ENCODE measurements at regions of chr17 and their contacts with region 1.

Region 1: GRCh38 chr17:55770148-55770870 is 19.5 kb downstream of the PCTP start:
- DNase-seq: peak; percentile 73
- H3K4me3 ChIP-seq: no peak overlapping the region; a peak in 1 of 4 replicates
- H3K27ac ChIP-seq: no peak overlapping the region
- H3K4me1 ChIP-seq: peaks cover 8 to 9% of the 10 kb centered on the region in 2 experiments
- H3K27me3 ChIP-seq: no peaks in the 10 kb centered on the region
- CTCF ChIP-seq: peak; percentile 85
- EP300 ChIP-seq: no peak
- RAD21 ChIP-seq: peak; percentile 94

Region 2: DNA sequence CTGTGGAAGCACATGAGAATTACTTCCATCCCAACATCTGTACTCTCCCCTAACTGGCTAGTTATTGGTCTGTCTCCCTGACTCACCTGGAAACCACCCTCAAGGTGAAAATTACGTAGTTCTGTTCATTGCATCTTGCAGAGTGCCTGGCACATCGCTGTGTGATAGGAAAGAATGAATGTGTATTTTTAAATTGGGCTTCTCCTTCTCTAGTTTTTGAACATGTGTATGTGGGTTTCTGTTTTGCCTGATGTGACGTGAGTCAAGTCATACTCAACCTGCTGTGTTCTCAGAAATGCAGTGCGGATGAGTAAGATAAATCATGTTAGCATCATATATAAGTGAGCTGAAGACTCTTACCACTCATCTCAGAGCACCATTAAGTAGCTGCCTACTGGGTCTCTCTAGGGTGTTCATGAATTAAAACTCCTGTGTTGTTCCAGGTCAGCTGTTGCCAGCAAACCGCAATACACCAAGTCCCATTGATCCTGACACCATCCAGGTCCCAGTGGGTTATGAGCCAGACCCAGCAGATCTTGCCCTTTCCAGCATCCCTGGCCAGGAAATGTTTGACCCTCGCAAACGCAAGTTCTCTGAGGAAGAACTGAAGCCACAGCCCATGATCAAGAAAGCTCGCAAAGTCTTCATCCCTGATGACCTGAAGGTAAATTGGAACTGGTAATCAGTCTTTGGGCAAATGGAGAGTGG is 455.4 kb before region 1 on chr17:
- CTCF ChIA-PET with region 1: no interaction called
- POLR2A ChIA-PET with region 1: no interaction called
- DNase-seq: no peak
- H3K4me3 ChIP-seq: no peak overlapping the region
- H3K27ac ChIP-seq: no peak overlapping the region
- H3K4me1 ChIP-seq: no peaks in the 10 kb centered on the region
- H3K27me3 ChIP-seq: no peaks in the 10 kb centered on the region
- CTCF ChIP-seq: no peak
- EP300 ChIP-seq: no peak
- RAD21 ChIP-seq: no peak

Region 3: GRCh38 chr17:55533608-55534007 is 236.7 kb before region 1 on chr17:
- CTCF ChIA-PET with region 1: interaction called, 499 read pairs
- POLR2A ChIA-PET with region 1: no interaction called
- DNase-seq: no peak
- H3K4me3 ChIP-seq: no peak overlapping the region
- H3K27ac ChIP-seq: peak overlapping the region in 1 of 2 experiments; percentile 26; a peak in 2 of 4 replicates
- H3K4me1 ChIP-seq: peaks cover 0 to 13% of the 10 kb centered on the region in 2 experiments; a peak in 2 of 4 replicates
- H3K27me3 ChIP-seq: no peaks in the 10 kb centered on the region
- CTCF ChIP-seq: no peak
- EP300 ChIP-seq: no peak
- RAD21 ChIP-seq: no peak

Region 4: DNA sequence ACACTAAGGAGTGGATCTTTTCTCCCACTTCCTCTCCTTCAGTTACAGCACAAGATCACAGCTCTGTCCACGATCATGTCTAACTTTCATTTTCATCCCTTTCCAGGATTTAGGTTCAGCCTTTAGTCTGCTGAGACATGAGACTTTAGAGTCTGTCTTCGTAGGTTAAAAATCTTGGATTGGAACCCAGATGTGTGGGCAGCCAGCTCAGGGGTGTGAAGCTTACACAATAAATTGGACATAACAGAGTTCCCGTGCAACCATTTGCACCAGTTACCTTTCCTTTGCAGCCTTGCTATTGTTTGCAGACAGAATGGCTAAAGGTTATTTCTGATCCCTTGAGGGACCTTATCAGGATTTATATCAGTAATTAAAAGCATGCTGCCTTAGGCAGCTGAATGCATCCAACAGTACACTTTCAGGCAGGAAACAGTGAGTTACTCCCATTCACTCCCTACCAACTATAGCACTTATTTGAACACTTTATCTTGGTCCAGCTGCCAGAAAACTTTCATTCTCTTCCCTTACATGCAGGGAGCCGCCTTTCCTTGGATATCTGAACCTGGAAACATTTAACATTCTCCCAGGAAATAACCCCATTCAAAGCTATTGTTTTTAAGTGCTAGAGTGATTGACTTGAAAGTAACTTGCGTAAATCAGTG is 134.9 kb before region 1 on chr17:
- CTCF ChIA-PET with region 1: interaction called, 16 read pairs
- POLR2A ChIA-PET with region 1: no interaction called
- DNase-seq: peak; percentile 44
- H3K4me3 ChIP-seq: peak overlapping the region; percentile 23 to 30; a peak in 2 of 4 replicates
- H3K27ac ChIP-seq: peak overlapping the region in 1 of 2 experiments; percentile 74; a peak in 1 of 4 replicates
- H3K4me1 ChIP-seq: peaks cover 0 to 21% of the 10 kb centered on the region in 2 experiments; a peak in 2 of 4 replicates
- H3K27me3 ChIP-seq: no peaks in the 10 kb centered on the region
- CTCF ChIP-seq: no peak
- EP300 ChIP-seq: peak in 1 of 2 experiments; percentile 65; a peak in 1 of 4 replicates
- RAD21 ChIP-seq: peak; percentile 26; the same call in 1 of the 2 replicates

Region 5: GRCh38 chr17:55690105-55690508 is 80.2 kb before region 1 on chr17:
- CTCF ChIA-PET with region 1: interaction called, 18 read pairs
- POLR2A ChIA-PET with region 1: no interaction called
- DNase-seq: peak; percentile 58
- H3K4me3 ChIP-seq: no peak overlapping the region
- H3K27ac ChIP-seq: peak overlapping the region in 1 of 2 experiments; percentile 99; a peak in 2 of 4 replicates
- H3K4me1 ChIP-seq: peaks cover 0 to 54% of the 10 kb centered on the region in 2 experiments; a peak in 3 of 4 replicates
- H3K27me3 ChIP-seq: no peaks in the 10 kb centered on the region
- CTCF ChIP-seq: no peak
- EP300 ChIP-seq: peak; percentile 22 to 99; a peak in 2 of 4 replicates
- RAD21 ChIP-seq: peak; percentile 38

Region 6: GRCh38 chr17:55735731-55736405 is 34.4 kb before region 1 on chr17:
- CTCF ChIA-PET with region 1: interaction called, 29 read pairs
- POLR2A ChIA-PET with region 1: no interaction called
- DNase-seq: peak; percentile 52
- H3K4me3 ChIP-seq: no peak overlapping the region; a peak in 1 of 4 replicates
- H3K27ac ChIP-seq: no peak overlapping the region
- H3K4me1 ChIP-seq: peaks cover 14 to 39% of the 10 kb centered on the region in 2 experiments
- H3K27me3 ChIP-seq: no peaks in the 10 kb centered on the region
- CTCF ChIP-seq: peak; percentile 89
- EP300 ChIP-seq: no peak
- RAD21 ChIP-seq: peak; percentile 77

Region 7: GRCh38 chr17:55825213-55825612 is 54.9 kb after region 1 on chr17:
- CTCF ChIA-PET with region 1: interaction called, 12 read pairs
- POLR2A ChIA-PET with region 1: no interaction called
- DNase-seq: no peak
- H3K4me3 ChIP-seq: no peak overlapping the region
- H3K27ac ChIP-seq: no peak overlapping the region
- H3K4me1 ChIP-seq: peaks cover 0 to 2% of the 10 kb centered on the region in 2 experiments; a peak in 2 of 4 replicates
- H3K27me3 ChIP-seq: peaks cover 4% of the 10 kb centered on the region; the same call in 1 of the 2 replicates
- CTCF ChIP-seq: peak; percentile 41
- EP300 ChIP-seq: no peak
- RAD21 ChIP-seq: peak; percentile 62

Region 8: GRCh38 chr17:56313201-56313600 is 542.9 kb after region 1 on chr17:
- CTCF ChIA-PET with region 1: no interaction called
- POLR2A ChIA-PET with region 1: no interaction called
- DNase-seq: no peak
- H3K4me3 ChIP-seq: no peak overlapping the region
- H3K27ac ChIP-seq: no peak overlapping the region
- H3K4me1 ChIP-seq: no peaks in the 10 kb centered on the region
- H3K27me3 ChIP-seq: no peaks in the 10 kb centered on the region
- CTCF ChIP-seq: no peak
- EP300 ChIP-seq: no peak
- RAD21 ChIP-seq: no peak

Measured in SK-N-SH (cell line).